SK-N-SH (cell line): ENCODE measurements at regions of chr2 and their contacts with region 1.

Region 1: GRCh38 chr2:1550658-1551316 is 137.5 kb downstream of the TPO start:
- DNase-seq: peak; percentile 96
- H3K4me3 ChIP-seq: peak overlapping the region in 1 of 2 experiments; percentile 25; a peak in 1 of 4 replicates
- H3K27ac ChIP-seq: no peak overlapping the region
- H3K4me1 ChIP-seq: peaks cover 0 to 18% of the 10 kb centered on the region in 2 experiments; a peak in 1 of 4 replicates
- H3K27me3 ChIP-seq: no peaks in the 10 kb centered on the region
- CTCF ChIP-seq: peak; percentile 99
- EP300 ChIP-seq: no peak
- RAD21 ChIP-seq: peak; percentile 73

Region 2: DNA sequence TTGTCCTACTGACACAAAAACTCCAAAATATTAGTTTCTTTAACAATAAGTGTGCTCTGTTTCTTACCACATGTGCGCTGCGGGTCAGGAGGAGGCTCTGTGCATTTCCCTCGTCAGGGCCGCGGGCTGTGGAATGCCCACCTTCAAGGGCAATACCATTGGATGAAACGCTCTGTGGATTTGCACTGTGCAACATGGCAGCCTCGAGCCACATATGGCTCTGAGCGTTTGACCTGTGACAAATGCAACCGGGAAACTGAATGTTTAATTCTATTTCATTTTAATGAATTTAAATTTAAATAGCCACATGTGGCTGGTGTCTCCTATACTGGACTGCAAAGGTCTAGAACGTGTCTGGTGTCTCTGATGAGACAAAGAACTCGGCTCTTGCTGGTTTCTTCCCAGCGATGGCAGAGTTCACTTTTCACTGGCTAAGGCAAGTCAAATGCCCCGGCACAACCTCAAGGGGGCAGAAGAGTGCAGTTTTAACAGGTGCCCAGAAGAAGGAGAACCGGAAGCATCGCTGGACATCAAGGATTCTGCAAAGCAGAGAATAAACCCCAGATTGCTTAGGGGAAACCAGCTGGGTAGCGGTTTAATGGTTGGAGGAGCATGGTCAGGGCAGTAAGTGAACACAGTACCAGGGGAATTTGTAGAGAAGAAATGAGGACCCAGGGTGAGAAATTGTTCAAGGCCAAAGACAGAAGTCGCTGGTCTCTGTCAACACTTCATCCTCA is 836.6 kb before region 1 on chr2:
- CTCF ChIA-PET with region 1: interaction called, 30 read pairs
- POLR2A ChIA-PET with region 1: no interaction called
- DNase-seq: peak; percentile 83
- H3K4me3 ChIP-seq: no peak overlapping the region; a peak in 1 of 4 replicates
- H3K27ac ChIP-seq: no peak overlapping the region
- H3K4me1 ChIP-seq: peaks cover 0 to 6% of the 10 kb centered on the region in 2 experiments; a peak in 1 of 4 replicates
- H3K27me3 ChIP-seq: no peaks in the 10 kb centered on the region; the same call in 1 of the 2 replicates
- CTCF ChIP-seq: peak; percentile 93
- EP300 ChIP-seq: no peak
- RAD21 ChIP-seq: peak; percentile 93

Region 3: GRCh38 chr2:1210352-1210751 is 340.4 kb before region 1 on chr2:
- CTCF ChIA-PET with region 1: interaction called, 12 read pairs
- POLR2A ChIA-PET with region 1: no interaction called
- DNase-seq: no peak
- H3K4me3 ChIP-seq: no peak overlapping the region
- H3K27ac ChIP-seq: no peak overlapping the region
- H3K4me1 ChIP-seq: no peaks in the 10 kb centered on the region
- H3K27me3 ChIP-seq: no peaks in the 10 kb centered on the region
- CTCF ChIP-seq: no peak
- EP300 ChIP-seq: no peak
- RAD21 ChIP-seq: no peak

Region 4: GRCh38 chr2:1502891-1503304 is 47.9 kb before region 1 on chr2:
- CTCF ChIA-PET with region 1: interaction called, 13 read pairs
- POLR2A ChIA-PET with region 1: no interaction called
- DNase-seq: no peak
- H3K4me3 ChIP-seq: no peak overlapping the region
- H3K27ac ChIP-seq: no peak overlapping the region
- H3K4me1 ChIP-seq: no peaks in the 10 kb centered on the region
- H3K27me3 ChIP-seq: no peaks in the 10 kb centered on the region
- CTCF ChIP-seq: no peak
- EP300 ChIP-seq: no peak
- RAD21 ChIP-seq: no peak

Region 5: DNA sequence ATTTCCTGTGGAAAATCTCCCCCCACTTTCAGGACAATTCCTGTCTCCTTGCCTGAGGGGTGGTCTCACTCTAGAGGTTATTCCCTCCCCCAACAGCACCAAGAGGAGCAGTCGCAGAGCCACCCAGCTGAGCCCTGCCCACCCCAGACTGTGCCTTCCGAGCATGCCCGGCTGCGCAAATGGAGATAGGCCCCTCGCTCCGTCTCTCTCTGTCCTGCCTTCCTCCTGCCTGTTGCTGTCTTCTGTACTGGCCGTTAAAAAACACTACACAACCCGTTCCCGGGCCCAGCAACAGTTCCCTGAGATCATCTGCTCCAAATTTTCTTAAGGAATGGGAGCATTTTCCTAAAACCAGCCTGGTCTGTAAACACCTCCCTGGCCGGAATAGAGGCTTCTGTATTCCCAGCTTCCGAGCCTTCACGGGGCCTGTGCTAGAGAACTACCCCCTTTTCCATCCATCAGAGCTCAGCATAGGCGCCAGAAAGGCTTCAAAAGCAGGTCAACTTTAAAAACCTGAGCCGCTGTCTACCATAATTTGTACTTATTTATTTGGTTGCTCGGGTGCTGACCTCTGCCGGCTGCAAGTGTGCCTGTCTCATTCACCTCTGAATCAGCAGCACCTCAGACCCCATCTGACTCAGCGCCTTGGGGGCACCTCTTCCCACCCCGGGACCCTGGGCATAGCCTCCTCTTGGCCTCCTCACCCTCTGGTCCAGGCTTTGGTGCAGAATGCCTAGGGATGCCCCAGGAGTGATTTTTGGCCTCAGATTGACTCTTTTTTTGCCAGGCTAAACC is 34.1 kb after region 1 on chr2:
- CTCF ChIA-PET with region 1: interaction called, 19 read pairs
- POLR2A ChIA-PET with region 1: no interaction called
- DNase-seq: no peak
- H3K4me3 ChIP-seq: no peak overlapping the region
- H3K27ac ChIP-seq: no peak overlapping the region
- H3K4me1 ChIP-seq: no peaks in the 10 kb centered on the region; a peak in 1 of 4 replicates
- H3K27me3 ChIP-seq: no peaks in the 10 kb centered on the region
- CTCF ChIP-seq: 0 out of 2 replicates have a peak, but pooled peaks have one; percentile 7
- EP300 ChIP-seq: no peak
- RAD21 ChIP-seq: no peak

Region 6: GRCh38 chr2:1742681-1743395 is 192.1 kb after region 1 on chr2:
- CTCF ChIA-PET with region 1: interaction called, 73 read pairs
- POLR2A ChIA-PET with region 1: no interaction called
- DNase-seq: peak; percentile 89
- H3K4me3 ChIP-seq: peak overlapping the region; percentile 84 to 91
- H3K27ac ChIP-seq: peak overlapping the region; percentile 95 to 98
- H3K4me1 ChIP-seq: peaks cover 30 to 57% of the 10 kb centered on the region in 2 experiments; a peak in 3 of 4 replicates
- H3K27me3 ChIP-seq: no peaks in the 10 kb centered on the region
- CTCF ChIP-seq: peak; percentile 84
- EP300 ChIP-seq: no peak; a peak in 2 of 4 replicates
- RAD21 ChIP-seq: peak; percentile 87

Region 7: DNA sequence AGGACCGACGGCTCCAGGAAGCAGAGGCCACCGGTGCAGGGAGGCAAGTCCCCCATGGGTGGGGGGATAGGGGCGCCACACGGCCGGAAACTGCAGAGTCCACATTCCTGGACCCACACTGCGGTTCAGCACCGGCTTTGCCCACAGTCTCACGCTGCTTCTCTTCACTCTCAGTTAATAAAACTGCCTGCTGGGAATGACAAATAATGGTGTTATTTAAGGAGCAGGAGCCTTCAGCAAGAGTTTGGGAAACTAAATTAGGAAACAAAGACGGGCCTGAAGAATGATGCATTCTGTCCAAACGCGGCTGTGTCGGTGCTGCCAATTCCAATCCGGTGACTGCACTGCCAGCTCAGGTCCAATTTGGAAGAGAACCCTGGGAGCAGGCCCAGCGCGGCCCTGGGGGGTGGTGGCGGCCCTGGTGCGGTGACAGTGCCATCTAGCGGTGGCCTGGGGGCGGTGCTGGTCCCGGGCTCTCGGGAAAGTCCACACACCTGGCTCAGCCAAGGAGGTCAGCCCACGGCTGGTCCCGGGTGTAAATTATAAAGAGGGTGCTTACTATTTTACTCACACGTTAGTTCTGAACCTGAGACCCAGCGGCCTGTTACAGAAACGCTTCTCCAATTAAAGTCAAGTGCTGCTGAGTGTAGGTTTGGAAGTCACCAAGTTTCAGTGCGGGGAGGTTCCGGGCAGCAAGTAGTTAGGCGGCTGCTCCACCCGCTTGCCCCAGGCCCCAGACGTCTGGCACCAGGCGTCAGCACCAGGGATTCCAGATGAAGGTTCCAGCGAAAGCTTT is 266.7 kb after region 1 on chr2:
- CTCF ChIA-PET with region 1: interaction called, 12 read pairs
- POLR2A ChIA-PET with region 1: no interaction called
- DNase-seq: peak; percentile 99
- H3K4me3 ChIP-seq: peak overlapping the region in 1 of 2 experiments; percentile 23; a peak in 1 of 4 replicates
- H3K27ac ChIP-seq: peak overlapping the region; percentile 36 to 86; a peak in 3 of 4 replicates
- H3K4me1 ChIP-seq: peaks cover 0 to 14% of the 10 kb centered on the region in 2 experiments; a peak in 1 of 4 replicates
- H3K27me3 ChIP-seq: no peaks in the 10 kb centered on the region
- CTCF ChIP-seq: peak; percentile 100
- EP300 ChIP-seq: peak in 1 of 2 experiments; percentile 73; a peak in 2 of 4 replicates
- RAD21 ChIP-seq: peak; percentile 76